ENCODE measurements at regions of chr10 and their contacts with region 1.

Region 1: GRCh38 chr10:103966671-103967447 is at the start of gene SLK:
- DNase-seq: peak; percentile 74 to 93 (median 87)
- ATAC-seq: peak; percentile 96
- H3K4me3 ChIP-seq: peak within 1 kb of the TSS; percentile 81
- H3K4me3 Mint-ChIP-seq: peak within 1 kb of the TSS; percentile 93 to 100 (median 98)
- H3K27ac ChIP-seq: peak within 1 kb of the TSS; percentile 78
- H3K27ac Mint-ChIP-seq: peak within 1 kb of the TSS; percentile 91 to 96 (median 94)
- H3K4me1 ChIP-seq: peaks cover 3 to 11% of the 10 kb centered on the region in 2 donors
- H3K4me1 Mint-ChIP-seq: peaks cover 17 to 56% (median 44%) of the 10 kb centered on the region in 7 donors
- H3K27me3 ChIP-seq: no peaks in the 10 kb centered on the region
- H3K27me3 Mint-ChIP-seq: no peaks in the 10 kb centered on the region
- total RNA-seq, gene SLK: 21.4 to 32.2 (median 26.2) TPM

Region 2: GRCh38 chr10:103584216-103585010 is 382.4 kb before region 1 on chr10:
- CTCF ChIA-PET with region 1: no interaction called
- POLR2A ChIA-PET with region 1: interaction called, 6 read pairs
- intact Hi-C with region 1: loop called (anchors 1 kb)
- DNase-seq: peak; percentile 46 to 69 (median 58)
- ATAC-seq: peak; percentile 86
- H3K4me3 ChIP-seq: peak overlapping the region; percentile 91
- H3K4me3 Mint-ChIP-seq: peak overlapping the region; percentile 84 to 98 (median 90)
- H3K27ac ChIP-seq: peak overlapping the region; percentile 65
- H3K27ac Mint-ChIP-seq: peak overlapping the region; percentile 84 to 98 (median 96)
- H3K4me1 ChIP-seq: peaks cover 6 to 10% of the 10 kb centered on the region in 2 donors
- H3K4me1 Mint-ChIP-seq: peaks cover 4 to 27% (median 18%) of the 10 kb centered on the region in 7 donors
- H3K27me3 ChIP-seq: no peaks in the 10 kb centered on the region
- H3K27me3 Mint-ChIP-seq: peaks cover 0 to 10% (median 0%) of the 10 kb centered on the region in 5 donors

Region 3: DNA sequence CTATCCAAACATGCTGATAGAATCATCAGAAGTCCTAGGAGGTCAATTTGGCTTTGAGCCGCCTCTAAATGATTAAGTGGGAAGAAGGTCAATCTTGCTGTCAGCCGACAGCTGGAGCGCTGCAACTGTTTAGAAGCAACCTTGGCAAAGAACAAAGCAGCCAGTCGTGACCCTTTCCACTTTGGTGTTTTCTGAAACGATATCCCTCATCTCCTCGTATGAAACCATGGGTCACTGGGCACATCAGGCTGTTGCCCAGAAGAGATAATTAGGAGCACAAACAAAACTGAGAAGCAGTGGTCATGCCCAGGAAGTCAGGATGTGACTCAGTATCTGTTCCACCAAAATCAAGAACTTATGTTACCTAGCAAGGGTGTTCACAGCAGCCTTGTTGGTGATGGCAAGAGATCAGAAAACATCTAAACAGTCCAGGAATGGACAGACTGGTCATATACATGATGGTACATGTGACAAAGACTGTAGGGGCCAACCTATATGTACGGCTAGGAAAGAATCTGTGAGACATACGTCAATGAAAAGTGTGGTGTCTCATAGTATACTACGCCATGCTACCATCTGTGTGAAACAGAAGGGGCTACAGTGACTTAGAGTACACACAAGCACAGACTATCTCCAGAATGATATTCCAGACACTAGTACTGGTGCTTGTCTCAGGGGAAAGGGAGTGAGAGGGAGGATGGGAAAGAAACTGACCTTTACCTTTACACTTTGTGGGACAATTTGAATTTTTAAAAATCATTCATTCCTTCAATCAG is 71.3 kb before region 1 on chr10:
- CTCF ChIA-PET with region 1: no interaction called
- POLR2A ChIA-PET with region 1: no interaction called
- intact Hi-C with region 1: loop called in 1 of 2 experiments (anchors 2 kb)
- DNase-seq: no peak
- ATAC-seq: no peak
- H3K4me3 ChIP-seq: no peak overlapping the region
- H3K4me3 Mint-ChIP-seq: peak overlapping the region in 1 of 10 donors; percentile 51
- H3K27ac ChIP-seq: no peak overlapping the region
- H3K27ac Mint-ChIP-seq: peak overlapping the region in 7 of 9 donors; percentile 47 to 86 (median 77)
- H3K4me1 ChIP-seq: peaks cover 0 to 14% of the 10 kb centered on the region in 2 donors
- H3K4me1 Mint-ChIP-seq: peaks cover 22 to 51% (median 33%) of the 10 kb centered on the region in 7 donors
- H3K27me3 ChIP-seq: no peaks in the 10 kb centered on the region
- H3K27me3 Mint-ChIP-seq: no peaks in the 10 kb centered on the region

Region 4: DNA sequence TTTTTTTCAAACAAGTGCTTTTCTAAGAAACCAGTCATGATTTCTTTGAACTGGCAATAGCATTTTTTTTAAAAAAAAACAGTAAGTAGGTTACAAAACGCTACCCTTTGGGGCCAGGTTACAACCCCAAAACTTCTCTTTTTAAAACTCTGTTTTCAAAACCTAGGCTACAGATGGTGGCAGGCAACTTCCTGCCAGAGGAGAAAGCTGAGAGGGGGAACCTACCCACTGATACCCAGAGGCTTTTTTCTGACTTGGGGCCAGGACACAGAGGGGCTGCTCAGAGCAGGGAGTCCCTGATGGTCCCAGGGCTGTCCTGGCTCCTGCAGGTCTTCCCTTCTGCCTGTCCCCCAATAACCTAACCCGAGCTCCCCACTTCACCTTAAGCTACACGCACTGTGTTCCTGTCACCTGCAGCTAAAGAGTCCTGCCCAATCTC is 55.8 kb before region 1 on chr10:
- CTCF ChIA-PET with region 1: no interaction called
- POLR2A ChIA-PET with region 1: interaction called, 8 read pairs
- intact Hi-C with region 1: loop called in 1 of 2 experiments (anchors 1 kb)
- DNase-seq: peak in 8 of 9 donors; percentile 44 to 89 (median 83)
- ATAC-seq: peak; percentile 84
- H3K4me3 ChIP-seq: peak overlapping the region; percentile 55
- H3K4me3 Mint-ChIP-seq: peak overlapping the region; percentile 74 to 87 (median 84)
- H3K27ac ChIP-seq: peak overlapping the region; percentile 78
- H3K27ac Mint-ChIP-seq: peak overlapping the region; percentile 96 to 99 (median 97)
- H3K4me1 ChIP-seq: peaks cover 80 to 81% of the 10 kb centered on the region in 2 donors
- H3K4me1 Mint-ChIP-seq: peaks cover 47 to 88% (median 76%) of the 10 kb centered on the region in 7 donors
- H3K27me3 ChIP-seq: no peaks in the 10 kb centered on the region
- H3K27me3 Mint-ChIP-seq: no peaks in the 10 kb centered on the region

Region 5: DNA sequence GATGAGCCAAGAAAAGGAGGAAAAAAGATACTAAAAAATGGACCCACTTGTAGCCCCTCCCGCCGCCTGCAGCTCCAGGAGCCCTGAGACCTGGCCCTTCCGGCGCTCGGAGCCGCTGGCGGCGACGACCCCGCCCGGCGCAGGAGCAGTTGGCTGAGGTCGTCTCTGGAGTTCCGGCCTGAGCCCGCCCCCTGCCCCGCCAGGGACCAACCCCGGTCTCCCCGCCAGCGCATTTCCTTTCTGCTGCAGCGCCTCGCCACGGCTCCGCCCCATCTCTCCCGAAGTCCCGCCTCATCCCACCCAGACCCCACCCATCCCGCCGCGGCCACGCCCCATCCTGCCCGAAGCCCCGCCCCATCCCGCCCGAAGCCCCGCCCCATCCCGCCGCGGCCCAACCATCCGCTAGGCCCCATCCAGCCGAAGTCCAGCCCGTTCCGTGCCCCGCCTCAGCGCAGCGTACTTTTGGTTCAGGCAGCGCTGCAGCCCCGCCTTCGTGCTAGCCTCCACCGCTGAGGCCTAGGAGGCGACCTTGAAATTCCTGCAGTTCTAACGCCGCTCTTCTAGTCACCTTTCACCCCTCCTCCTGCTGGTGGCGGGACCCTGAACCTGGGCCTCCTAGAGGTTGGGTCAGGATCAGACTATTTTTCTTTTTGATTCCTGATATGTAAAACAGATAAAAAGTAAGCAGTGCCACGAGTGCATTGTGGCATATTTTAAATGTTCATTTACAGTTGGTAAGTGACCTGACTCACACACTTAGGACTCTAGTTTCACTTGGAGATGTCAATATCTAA is 48.6 kb before region 1 on chr10 and contains the start of gene STN1:
- CTCF ChIA-PET with region 1: interaction called, 3 read pairs
- POLR2A ChIA-PET with region 1: interaction called, 5 read pairs
- intact Hi-C with region 1: loop called (anchors 1 kb)
- DNase-seq: peak; percentile 81 to 95 (median 94)
- ATAC-seq: peak; percentile 97
- H3K4me3 ChIP-seq: peak within 1 kb of the TSS; percentile 89
- H3K4me3 Mint-ChIP-seq: peak within 1 kb of the TSS; percentile 88 to 99 (median 97)
- H3K27ac ChIP-seq: peak within 1 kb of the TSS; percentile 79
- H3K27ac Mint-ChIP-seq: peak within 1 kb of the TSS; percentile 95 to 99 (median 97)
- H3K4me1 ChIP-seq: peaks cover 28 to 31% of the 10 kb centered on the region in 2 donors
- H3K4me1 Mint-ChIP-seq: peaks cover 15 to 44% (median 38%) of the 10 kb centered on the region in 7 donors
- H3K27me3 ChIP-seq: no peaks in the 10 kb centered on the region
- H3K27me3 Mint-ChIP-seq: no peaks in the 10 kb centered on the region
- total RNA-seq, gene STN1: 28.8 to 42.6 (median 34.8) TPM

Region 6: DNA sequence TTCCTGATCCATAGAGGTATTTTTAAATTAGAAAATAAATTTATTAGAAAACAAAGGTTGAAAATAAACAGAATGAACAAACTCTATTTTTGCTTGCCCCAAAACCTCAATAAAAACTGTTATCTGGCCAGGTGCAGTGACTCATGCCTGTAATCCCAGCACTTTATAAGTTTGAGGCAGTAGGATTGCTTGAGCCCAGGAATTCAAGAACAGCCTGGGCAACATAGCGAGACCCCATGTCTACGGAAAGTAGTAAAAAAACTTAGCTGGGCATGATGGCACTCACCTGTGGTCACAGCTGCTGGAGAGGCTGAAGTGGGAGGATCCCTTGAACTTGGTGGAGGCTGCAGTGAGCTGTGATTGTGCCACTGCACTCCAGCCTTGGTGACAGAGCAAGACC is 10.3 kb after region 1 on chr10:
- CTCF ChIA-PET with region 1: no interaction called
- POLR2A ChIA-PET with region 1: interaction called, 10 read pairs
- intact Hi-C with region 1: loop called in 1 of 2 experiments (anchors 1 kb)
- DNase-seq: no peak
- ATAC-seq: no peak
- H3K4me3 ChIP-seq: no peak overlapping the region
- H3K4me3 Mint-ChIP-seq: no peak overlapping the region
- H3K27ac ChIP-seq: no peak overlapping the region
- H3K27ac Mint-ChIP-seq: no peak overlapping the region
- H3K4me1 ChIP-seq: peaks cover 6 to 14% of the 10 kb centered on the region in 2 donors
- H3K4me1 Mint-ChIP-seq: peaks cover 44 to 73% (median 65%) of the 10 kb centered on the region in 7 donors
- H3K27me3 ChIP-seq: no peaks in the 10 kb centered on the region
- H3K27me3 Mint-ChIP-seq: no peaks in the 10 kb centered on the region

Region 7: DNA sequence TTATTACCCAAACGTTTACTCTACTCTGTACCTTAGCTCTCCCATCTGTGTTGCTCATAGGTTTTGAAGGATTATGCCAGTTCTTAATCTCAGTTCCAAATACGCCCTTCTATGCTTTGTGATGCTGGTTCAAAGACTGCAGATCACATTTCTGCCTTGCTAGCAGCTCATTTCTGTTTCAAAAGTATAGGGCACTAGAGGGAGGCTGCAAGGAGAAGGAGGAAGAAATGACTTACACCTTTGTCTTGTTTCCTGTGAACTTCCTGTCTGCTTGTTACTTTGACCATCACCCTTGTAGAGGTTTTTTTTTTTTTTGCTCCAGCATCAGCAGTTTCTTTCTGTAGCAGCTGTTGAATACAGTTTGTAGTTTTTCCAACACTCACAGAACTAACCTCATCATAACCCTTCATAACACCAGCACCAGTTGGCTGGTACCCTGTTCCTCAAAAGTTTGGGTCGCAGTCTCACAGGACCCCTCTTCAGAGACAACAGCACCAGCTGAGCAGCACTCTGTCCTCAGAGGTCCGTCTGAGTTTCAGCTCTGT is 16.6 kb after region 1 on chr10:
- CTCF ChIA-PET with region 1: interaction called, 3 read pairs
- POLR2A ChIA-PET with region 1: interaction called, 5 read pairs
- intact Hi-C with region 1: loop called (anchors 1 kb)
- DNase-seq: peak in 7 of 9 donors; percentile 17 to 47 (median 34)
- ATAC-seq: peak; percentile 87
- H3K4me3 ChIP-seq: peak overlapping the region; percentile 21
- H3K4me3 Mint-ChIP-seq: peak overlapping the region; percentile 22 to 87 (median 65)
- H3K27ac ChIP-seq: peak overlapping the region; percentile 64
- H3K27ac Mint-ChIP-seq: peak overlapping the region; percentile 38 to 89 (median 79)
- H3K4me1 ChIP-seq: peaks cover 21 to 23% of the 10 kb centered on the region in 2 donors
- H3K4me1 Mint-ChIP-seq: peaks cover 52 to 90% (median 77%) of the 10 kb centered on the region in 7 donors
- H3K27me3 ChIP-seq: no peaks in the 10 kb centered on the region
- H3K27me3 Mint-ChIP-seq: no peaks in the 10 kb centered on the region